ENCODE measurements at regions of chr20 and their contacts with region 1.

Region 1: GRCh38 chr20:39874049-39874888 is 814.8 kb downstream of the MAFB start:
- DNase-seq: no peak
- H3K4me3 ChIP-seq: no peak overlapping the region
- CTCF ChIP-seq: peak; percentile 76

Region 2: GRCh38 chr20:39778847-39779604 is 95.2 kb before region 1 on chr20:
- CTCF ChIA-PET with region 1: interaction called, 10 read pairs
- POLR2A ChIA-PET with region 1: no interaction called
- DNase-seq: no peak
- H3K4me3 ChIP-seq: no peak overlapping the region
- CTCF ChIP-seq: peak; percentile 14

Region 3: GRCh38 chr20:39829256-39829655 is 45.0 kb before region 1 on chr20:
- CTCF ChIA-PET with region 1: interaction called, 46 read pairs
- POLR2A ChIA-PET with region 1: no interaction called
- DNase-seq: no peak
- H3K4me3 ChIP-seq: no peak overlapping the region
- CTCF ChIP-seq: peak; percentile 72

Region 4: GRCh38 chr20:39849664-39850063 is 24.6 kb before region 1 on chr20:
- CTCF ChIA-PET with region 1: interaction called, 17 read pairs
- POLR2A ChIA-PET with region 1: no interaction called
- DNase-seq: peak; percentile 74
- H3K4me3 ChIP-seq: no peak overlapping the region
- CTCF ChIP-seq: no peak

Region 5: DNA sequence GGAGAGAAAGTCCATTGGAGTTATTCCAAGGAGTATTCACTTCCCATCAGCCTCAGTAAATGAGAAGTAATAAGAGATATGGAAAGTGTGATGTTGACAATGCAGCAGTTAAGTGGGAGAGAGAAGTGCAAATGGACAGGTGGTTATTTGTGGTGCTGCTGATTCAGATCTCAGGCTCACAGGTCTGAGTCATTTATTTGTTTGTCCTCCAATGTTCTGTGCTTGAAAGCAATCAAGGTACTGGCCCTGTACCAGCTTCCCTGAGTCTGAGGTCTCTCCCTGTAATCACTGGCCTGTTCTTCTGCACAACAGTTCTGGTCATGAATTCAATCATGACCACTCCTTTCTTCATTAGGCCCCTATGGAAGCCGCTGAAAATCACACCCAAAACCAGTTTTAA is 12.9 kb before region 1 on chr20:
- CTCF ChIA-PET with region 1: interaction called, 46 read pairs
- POLR2A ChIA-PET with region 1: no interaction called
- DNase-seq: no peak
- H3K4me3 ChIP-seq: no peak overlapping the region
- CTCF ChIP-seq: no peak

Region 6: GRCh38 chr20:39885975-39886649 is 11.8 kb after region 1 on chr20:
- CTCF ChIA-PET with region 1: interaction called, 26 read pairs
- POLR2A ChIA-PET with region 1: no interaction called
- DNase-seq: peak; percentile 70
- H3K4me3 ChIP-seq: no peak overlapping the region
- CTCF ChIP-seq: peak; percentile 51

Region 7: DNA sequence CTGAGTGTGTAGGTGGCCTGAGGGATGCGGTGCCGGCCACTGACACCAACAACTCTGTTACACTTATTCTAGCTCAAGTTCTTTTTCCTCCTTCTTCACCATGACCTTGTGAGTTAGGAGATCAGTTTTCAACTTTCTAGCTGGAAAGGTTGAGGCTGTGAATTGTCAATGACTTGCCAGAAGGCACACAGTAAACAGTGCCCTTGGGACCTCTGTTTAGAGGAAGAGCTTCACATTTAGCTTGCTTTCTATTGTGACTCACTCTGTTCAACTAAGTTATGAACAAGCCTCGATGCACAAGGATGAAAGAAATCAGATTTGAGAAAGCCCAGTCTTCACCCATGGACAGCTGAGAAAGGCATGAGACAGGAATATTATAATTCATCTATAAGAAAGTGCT is 359.1 kb after region 1 on chr20:
- CTCF ChIA-PET with region 1: no interaction called
- POLR2A ChIA-PET with region 1: no interaction called
- DNase-seq: no peak
- H3K4me3 ChIP-seq: no peak overlapping the region
- CTCF ChIP-seq: no peak